ENCODE measurements at regions of chr12 and their contacts with region 1.

Region 1: GRCh38 chr12:104381731-104382480 is 74.8 kb upstream of the CHST11 start:
- DNase-seq: peak; percentile 68
- ATAC-seq: peak; percentile 88
- H3K4me3 Mint-ChIP-seq: no peak overlapping the region
- H3K27ac Mint-ChIP-seq: no peak overlapping the region
- H3K4me1 Mint-ChIP-seq: peaks cover 9% of the 10 kb centered on the region
- H3K27me3 Mint-ChIP-seq: peaks cover 4% of the 10 kb centered on the region
- CTCF ChIP-seq: peak; percentile 29

Region 2: GRCh38 chr12:104360987-104361714 is 20.8 kb before region 1 on chr12:
- CTCF ChIA-PET with region 1: no interaction called
- POLR2A ChIA-PET with region 1: no interaction called
- intact Hi-C with region 1: no loop called
- DNase-seq: no peak
- ATAC-seq: no peak
- H3K4me3 Mint-ChIP-seq: no peak overlapping the region
- H3K27ac Mint-ChIP-seq: no peak overlapping the region
- H3K4me1 Mint-ChIP-seq: no peaks in the 10 kb centered on the region
- H3K27me3 Mint-ChIP-seq: no peaks in the 10 kb centered on the region
- CTCF ChIP-seq: no peak

Region 3: DNA sequence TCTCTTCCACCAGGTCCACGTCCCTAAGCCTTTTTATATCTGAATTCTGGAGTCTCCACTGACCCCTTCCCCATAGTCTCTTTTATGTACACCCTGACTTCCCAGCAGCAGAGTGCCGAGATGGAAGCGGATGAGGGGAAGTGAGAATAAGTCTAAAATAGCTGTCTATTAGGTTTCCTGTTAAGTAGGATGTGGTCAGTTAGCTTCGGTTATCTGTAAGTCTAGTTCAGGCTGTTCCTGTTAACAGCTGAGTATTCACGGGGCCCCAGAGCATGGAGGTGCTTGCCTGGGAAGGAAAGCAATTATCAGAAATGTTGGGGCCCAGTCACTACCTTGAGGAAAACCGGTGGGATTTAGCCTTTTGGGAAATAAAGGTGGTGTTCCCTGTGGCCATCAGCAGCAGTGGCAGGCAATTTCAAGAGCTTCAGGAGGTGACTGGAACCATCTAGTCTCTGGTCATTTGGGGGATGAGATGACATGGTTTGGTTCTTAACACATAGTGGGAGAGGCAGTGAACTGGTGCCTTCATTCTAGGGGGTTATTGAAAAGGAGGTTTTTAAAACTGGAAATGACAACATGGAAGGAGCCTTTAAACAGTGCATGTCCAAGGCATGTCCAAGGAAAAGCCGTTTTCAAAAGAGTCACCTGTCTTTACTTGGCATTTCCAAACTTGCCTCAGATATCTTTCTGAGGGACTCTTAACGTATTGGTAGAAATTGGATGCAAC is 96.7 kb after region 1 on chr12:
- CTCF ChIA-PET with region 1: interaction called, 10 read pairs
- POLR2A ChIA-PET with region 1: interaction called, 4 read pairs
- intact Hi-C with region 1: loop called (anchors 5 kb)
- DNase-seq: no peak
- ATAC-seq: peak; percentile 84
- H3K4me3 Mint-ChIP-seq: peak overlapping the region; percentile 87
- H3K27ac Mint-ChIP-seq: peak overlapping the region; percentile 90
- H3K4me1 Mint-ChIP-seq: peaks cover 92% of the 10 kb centered on the region
- H3K27me3 Mint-ChIP-seq: no peaks in the 10 kb centered on the region
- CTCF ChIP-seq: no peak

Region 4: GRCh38 chr12:104641862-104642261 is 260.0 kb after region 1 on chr12:
- CTCF ChIA-PET with region 1: interaction called, 43 read pairs
- POLR2A ChIA-PET with region 1: interaction called, 8 read pairs
- intact Hi-C with region 1: loop called (anchors 1 kb)
- DNase-seq: peak; percentile 44
- ATAC-seq: peak; percentile 86
- H3K4me3 Mint-ChIP-seq: peak overlapping the region; percentile 55
- H3K27ac Mint-ChIP-seq: peak overlapping the region; percentile 95
- H3K4me1 Mint-ChIP-seq: peaks cover 83% of the 10 kb centered on the region
- H3K27me3 Mint-ChIP-seq: no peaks in the 10 kb centered on the region
- CTCF ChIP-seq: no peak

Region 5: GRCh38 chr12:104695453-104696148 is 313.7 kb after region 1 on chr12:
- CTCF ChIA-PET with region 1: interaction called, 7 read pairs
- POLR2A ChIA-PET with region 1: interaction called, 6 read pairs
- intact Hi-C with region 1: loop called (anchors 5 kb)
- DNase-seq: peak; percentile 49
- ATAC-seq: peak; percentile 71
- H3K4me3 Mint-ChIP-seq: peak overlapping the region; percentile 57
- H3K27ac Mint-ChIP-seq: peak overlapping the region; percentile 81
- H3K4me1 Mint-ChIP-seq: peaks cover 84% of the 10 kb centered on the region
- H3K27me3 Mint-ChIP-seq: no peaks in the 10 kb centered on the region
- CTCF ChIP-seq: no peak

Region 6: GRCh38 chr12:104877123-104877705 is 495.3 kb after region 1 on chr12:
- CTCF ChIA-PET with region 1: interaction called, 46 read pairs
- POLR2A ChIA-PET with region 1: no interaction called
- intact Hi-C with region 1: loop called (anchors 1 kb)
- DNase-seq: no peak
- ATAC-seq: no peak
- H3K4me3 Mint-ChIP-seq: no peak overlapping the region
- H3K27ac Mint-ChIP-seq: no peak overlapping the region
- H3K4me1 Mint-ChIP-seq: no peaks in the 10 kb centered on the region
- H3K27me3 Mint-ChIP-seq: peaks cover 3% of the 10 kb centered on the region
- CTCF ChIP-seq: no peak

Region 7: DNA sequence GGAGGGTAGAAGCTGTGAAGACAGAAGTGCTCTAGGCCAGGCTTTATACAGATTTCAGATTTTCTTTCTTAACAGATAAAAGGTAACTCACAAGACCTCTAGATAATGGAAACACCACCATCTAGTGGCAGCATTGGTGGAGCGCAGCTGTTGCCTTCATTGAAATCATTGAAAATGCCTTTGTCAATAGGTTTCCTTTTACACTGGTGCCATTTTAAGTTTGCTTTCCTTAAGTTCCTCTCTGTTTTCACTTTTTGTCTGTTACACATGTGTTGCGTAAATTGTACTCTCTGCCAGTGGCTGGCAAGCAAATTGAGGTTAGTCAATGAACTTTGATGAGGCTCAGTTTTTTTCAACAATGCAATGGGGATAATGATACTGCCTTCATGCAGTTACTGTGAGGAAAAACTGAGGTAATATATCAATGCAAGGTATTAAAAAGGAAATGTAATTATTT is 671.2 kb after region 1 on chr12:
- CTCF ChIA-PET with region 1: interaction called, 85 read pairs
- POLR2A ChIA-PET with region 1: interaction called, 10 read pairs
- intact Hi-C with region 1: loop called (anchors 1 kb)
- DNase-seq: peak; percentile 36
- ATAC-seq: peak; percentile 91
- H3K4me3 Mint-ChIP-seq: no peak overlapping the region
- H3K27ac Mint-ChIP-seq: no peak overlapping the region
- H3K4me1 Mint-ChIP-seq: peaks cover 17% of the 10 kb centered on the region
- H3K27me3 Mint-ChIP-seq: no peaks in the 10 kb centered on the region
- CTCF ChIP-seq: peak; percentile 96

Measured in activated B cell treated with CpG ODN at 0.5 μM for 24 hours (primary cell).